ENCODE measurements at regions of chr6 and their contacts with region 1.

Region 1: DNA sequence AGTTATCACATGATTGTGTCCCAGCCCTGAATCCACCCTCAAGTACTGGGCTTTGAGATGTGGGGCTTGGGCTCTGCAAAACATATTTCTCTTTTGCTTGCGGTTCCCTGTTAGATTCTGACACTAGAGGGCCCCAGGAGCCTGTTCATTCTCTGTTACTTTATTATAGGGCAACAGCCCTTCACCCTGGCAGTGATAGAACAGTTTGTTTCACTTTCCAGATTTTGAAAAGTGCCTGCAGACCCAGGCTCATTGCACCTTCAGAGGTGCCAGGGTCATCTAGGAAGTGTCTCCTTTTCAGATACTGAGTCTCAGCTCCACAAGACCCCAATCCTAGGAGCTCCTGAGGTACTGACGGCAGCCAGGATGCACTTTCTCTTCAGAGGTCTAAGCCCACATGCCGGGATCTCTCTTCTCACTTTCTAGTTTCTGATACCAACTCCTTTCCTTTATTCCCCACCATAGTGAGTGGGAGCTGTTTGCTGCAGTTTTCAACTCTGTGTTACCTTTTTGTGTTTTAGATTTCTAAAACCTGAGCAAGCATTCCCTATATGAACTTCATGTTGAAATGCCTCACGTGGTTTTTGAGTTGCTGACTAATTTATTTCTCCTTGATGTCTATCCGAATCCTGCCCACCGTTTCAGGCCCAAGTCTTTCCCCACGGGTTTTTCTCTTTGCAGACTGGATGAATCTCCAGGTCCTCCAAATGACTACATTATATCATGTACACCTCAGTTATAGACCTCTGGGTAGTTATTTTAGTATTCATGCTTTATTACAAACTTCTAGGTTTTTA is 10.9 kb downstream of the ABT1 start:
- DNase-seq: peak; percentile 58
- H3K4me3 Mint-ChIP-seq: peak overlapping the region; percentile 56
- H3K27ac Mint-ChIP-seq: no peak overlapping the region
- H3K4me1 Mint-ChIP-seq: peaks cover 20% of the 10 kb centered on the region
- H3K27me3 Mint-ChIP-seq: peaks cover 16% of the 10 kb centered on the region

Region 2: GRCh38 chr6:26249957-26250697 is 357.5 kb before region 1 on chr6:
- intact Hi-C with region 1: no loop called
- DNase-seq: peak; percentile 68
- H3K4me3 Mint-ChIP-seq: peak overlapping the region; percentile 90
- H3K27ac Mint-ChIP-seq: peak overlapping the region; percentile 99
- H3K4me1 Mint-ChIP-seq: peaks cover 55% of the 10 kb centered on the region
- H3K27me3 Mint-ChIP-seq: peaks cover 2% of the 10 kb centered on the region

Region 3: GRCh38 chr6:26659042-26659999 is 51.7 kb after region 1 on chr6 and contains the start of gene ZNF322:
- intact Hi-C with region 1: loop called (anchors 2 kb)
- DNase-seq: peak; percentile 88
- H3K4me3 Mint-ChIP-seq: peak within 1 kb of the TSS; percentile 79
- H3K27ac Mint-ChIP-seq: peak within 1 kb of the TSS; percentile 0
- H3K4me1 Mint-ChIP-seq: peaks cover 43% of the 10 kb centered on the region
- H3K27me3 Mint-ChIP-seq: peaks cover 4% of the 10 kb centered on the region
- total RNA-seq, gene ZNF322: 8.8 and 9.1 TPM in 2 replicates

Region 4: DNA sequence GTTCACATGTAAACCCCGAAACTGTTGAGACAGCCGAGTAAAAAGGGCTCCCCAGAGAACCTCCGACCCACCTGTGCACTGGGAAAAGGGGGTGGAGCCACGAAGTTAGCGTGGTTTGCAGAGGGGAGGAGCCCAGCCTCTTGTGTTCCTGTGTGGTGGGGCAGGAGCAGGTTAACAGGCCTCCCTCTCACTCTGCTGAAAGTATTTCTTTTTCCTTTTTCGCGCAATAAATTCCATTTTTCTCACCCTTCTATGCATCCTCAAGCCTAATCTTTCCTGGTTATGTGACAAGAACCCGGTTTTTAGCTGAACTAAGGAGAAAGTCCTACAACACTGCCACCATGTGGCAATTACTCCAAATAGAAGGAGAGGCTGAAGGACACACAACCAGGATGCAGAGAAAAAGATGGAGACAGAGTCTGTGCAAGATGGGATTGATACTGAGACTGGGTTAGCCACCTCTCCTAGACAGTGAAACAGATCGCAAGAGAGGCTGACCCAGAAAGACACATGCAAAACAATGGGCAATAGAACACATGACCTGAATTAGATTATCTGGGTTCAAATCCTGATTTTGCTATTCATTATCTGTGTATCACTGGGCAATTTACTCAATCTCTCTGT is 471.2 kb after region 1 on chr6:
- intact Hi-C with region 1: loop called (anchors 1 kb)
- DNase-seq: no peak
- H3K4me3 Mint-ChIP-seq: peak overlapping the region; percentile 56
- H3K27ac Mint-ChIP-seq: no peak overlapping the region
- H3K4me1 Mint-ChIP-seq: peaks cover 9% of the 10 kb centered on the region
- H3K27me3 Mint-ChIP-seq: peaks cover 35% of the 10 kb centered on the region